ENCODE measurements at regions of chr13 and their contacts with region 1.

Region 1: GRCh38 chr13:31431722-31432137 is 232.0 kb downstream of the B3GLCT start:
- DNase-seq: peak; percentile 21
- H3K4me3 ChIP-seq: no peak overlapping the region
- H3K27ac ChIP-seq: no peak overlapping the region
- H3K4me1 ChIP-seq: no peaks in the 10 kb centered on the region
- H3K27me3 ChIP-seq: no peaks in the 10 kb centered on the region
- CTCF ChIP-seq: peak; percentile 70 to 76

Region 2: GRCh38 chr13:31119966-31120700 is 311.6 kb before region 1 on chr13:
- CTCF ChIA-PET with region 1: no interaction called
- dilution Hi-C with region 1: no loop called
- in situ Hi-C with region 1: no loop called
- intact Hi-C with region 1: no loop called
- DNase-seq: no peak
- H3K4me3 ChIP-seq: no peak overlapping the region
- H3K27ac ChIP-seq: no peak overlapping the region
- H3K4me1 ChIP-seq: no peaks in the 10 kb centered on the region
- H3K27me3 ChIP-seq: no peaks in the 10 kb centered on the region
- CTCF ChIP-seq: no peak

Region 3: DNA sequence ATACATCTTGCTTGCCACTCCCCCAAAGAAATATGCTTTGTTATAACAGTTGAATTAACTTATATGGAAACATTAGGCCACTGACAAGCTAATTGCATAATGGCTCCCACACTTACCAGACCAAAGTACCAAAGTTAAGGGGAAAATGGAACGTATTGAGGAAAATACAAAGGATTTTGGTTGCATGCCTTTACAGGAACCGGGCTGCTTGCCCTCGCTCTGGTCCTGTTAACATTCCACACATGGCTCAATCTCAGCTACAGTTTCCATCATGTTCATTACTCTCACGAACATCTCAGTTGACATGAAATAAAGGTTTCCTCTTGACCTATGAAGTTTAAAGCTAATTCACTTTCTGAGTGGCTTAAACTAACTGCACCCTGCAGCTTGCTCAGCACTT is 86.9 kb after region 1 on chr13:
- CTCF ChIA-PET with region 1: no interaction called
- dilution Hi-C with region 1: no loop called
- in situ Hi-C with region 1: no loop called
- intact Hi-C with region 1: no loop called
- DNase-seq: no peak
- H3K4me3 ChIP-seq: no peak overlapping the region
- H3K27ac ChIP-seq: no peak overlapping the region
- H3K4me1 ChIP-seq: no peaks in the 10 kb centered on the region
- H3K27me3 ChIP-seq: no peaks in the 10 kb centered on the region
- CTCF ChIP-seq: no peak

Region 4: DNA sequence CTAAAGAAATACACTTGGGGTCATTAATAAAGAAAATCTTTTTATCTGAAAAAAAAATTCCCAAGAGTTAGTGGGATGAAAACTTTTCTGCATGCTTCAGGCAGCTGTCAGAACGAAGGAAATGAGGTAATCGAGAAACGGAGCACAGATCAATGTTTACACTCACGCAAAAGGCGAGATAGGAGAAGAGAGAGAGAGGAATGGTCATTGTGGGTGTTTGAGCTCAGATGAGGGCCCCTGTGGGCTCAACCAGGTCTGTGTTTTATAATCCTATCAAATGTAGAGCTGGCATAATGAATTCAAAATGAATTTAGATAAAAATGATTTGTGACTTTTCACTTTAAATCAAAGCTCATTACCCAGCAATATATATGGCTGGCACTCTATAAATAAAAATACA is 301.3 kb after region 1 on chr13:
- CTCF ChIA-PET with region 1: no interaction called
- dilution Hi-C with region 1: no loop called
- in situ Hi-C with region 1: loop called in 1 of 2 experiments (anchors 10 kb)
- intact Hi-C with region 1: no loop called
- DNase-seq: no peak
- H3K4me3 ChIP-seq: no peak overlapping the region
- H3K27ac ChIP-seq: no peak overlapping the region
- H3K4me1 ChIP-seq: no peaks in the 10 kb centered on the region
- H3K27me3 ChIP-seq: no peaks in the 10 kb centered on the region
- CTCF ChIP-seq: no peak

Region 5: DNA sequence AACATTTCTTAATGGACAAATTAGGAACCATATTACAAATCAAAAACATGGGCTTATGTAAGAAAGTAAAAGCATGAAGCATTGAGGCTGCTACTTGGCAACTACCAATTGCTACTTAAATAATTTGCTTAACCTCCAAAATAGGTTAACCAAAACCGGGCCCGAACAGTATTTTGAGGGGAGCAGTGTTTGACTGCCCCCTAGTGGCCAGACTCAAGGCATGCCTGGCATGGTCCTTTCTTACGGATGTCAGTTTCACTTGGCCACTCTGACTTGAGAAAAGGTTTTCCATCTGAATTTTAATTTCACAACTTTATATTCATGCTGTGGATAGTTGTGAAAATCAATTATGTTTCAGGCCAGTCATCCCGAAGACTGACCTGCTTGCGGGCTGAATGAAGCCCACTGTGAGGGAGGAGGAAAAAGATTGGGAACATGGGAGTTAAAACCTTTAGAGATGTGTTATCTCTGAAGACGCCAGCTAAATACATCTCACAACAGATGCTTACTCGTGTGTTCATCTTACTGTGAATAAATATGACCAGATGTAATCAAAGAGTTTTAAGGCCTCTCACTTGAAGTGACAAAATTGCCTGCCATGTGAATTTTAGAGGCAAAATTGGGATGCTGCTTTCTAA is 310.5 kb after region 1 on chr13:
- CTCF ChIA-PET with region 1: interaction called, 3 read pairs
- dilution Hi-C with region 1: no loop called
- in situ Hi-C with region 1: loop called in 1 of 2 experiments (anchors 10 kb)
- intact Hi-C with region 1: loop called (anchors 1 kb)
- DNase-seq: peak; percentile 45
- H3K4me3 ChIP-seq: no peak overlapping the region
- H3K27ac ChIP-seq: no peak overlapping the region
- H3K4me1 ChIP-seq: no peaks in the 10 kb centered on the region
- H3K27me3 ChIP-seq: no peaks in the 10 kb centered on the region
- CTCF ChIP-seq: peak; percentile 97 to 98

Measured in mammary epithelial cell (primary cell).